B cell (primary cell): ENCODE measurements at regions of chr10 and their contacts with region 1.

Region 1: DNA sequence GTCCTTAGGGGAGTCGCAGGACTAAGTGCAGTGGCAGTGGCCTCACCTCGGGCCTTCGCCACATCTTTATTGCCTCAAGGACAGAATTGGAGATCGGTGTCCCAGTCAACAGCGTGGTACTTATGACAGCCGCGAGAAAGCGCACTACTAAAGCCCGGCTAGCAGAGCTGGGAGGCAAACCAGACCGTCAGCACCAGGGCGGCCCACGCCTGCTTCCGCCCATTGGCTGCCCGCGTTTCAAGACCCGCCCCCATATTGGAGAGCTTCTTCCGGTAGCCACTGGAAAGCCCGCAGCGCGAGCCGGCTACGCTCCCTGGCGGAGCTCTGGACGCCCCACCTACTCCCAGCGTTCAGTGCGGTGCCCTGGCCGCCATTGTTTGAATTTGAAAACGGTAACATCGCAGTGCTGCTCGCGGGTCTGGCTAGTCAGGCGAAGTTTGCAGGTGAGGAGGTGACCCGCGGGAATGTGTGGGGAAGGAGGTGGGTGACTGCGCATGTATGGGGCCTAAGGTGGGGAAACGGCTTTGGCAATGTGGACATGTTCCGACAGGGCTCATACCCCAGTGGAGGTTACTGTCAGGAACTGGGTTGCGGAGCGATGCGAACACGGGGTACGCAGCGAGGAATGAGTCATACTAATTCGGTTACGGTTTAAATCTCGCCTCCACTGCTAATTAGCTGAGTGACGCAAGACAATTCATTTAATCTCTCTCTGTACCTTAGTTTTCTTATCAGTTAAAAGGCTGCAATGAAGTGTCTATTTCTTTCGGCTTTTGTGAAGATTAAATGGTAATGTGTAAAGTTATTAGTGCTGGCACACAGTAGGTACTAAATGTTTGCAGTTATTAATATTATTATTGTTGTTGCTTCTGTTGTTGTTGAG is at the start of gene KIF20B:
- DNase-seq: peak; percentile 95
- ATAC-seq: peak; percentile 98
- H3K4me3 ChIP-seq: peak within 1 kb of the TSS; percentile 86 to 98 (median 95)
- H3K4me3 Mint-ChIP-seq: peak within 1 kb of the TSS; percentile 99
- H3K27ac ChIP-seq: peak within 1 kb of the TSS; percentile 79 to 87
- H3K27ac Mint-ChIP-seq: peak within 1 kb of the TSS; percentile 99
- H3K4me1 ChIP-seq: peaks cover 9 to 10% of the 10 kb centered on the region in 2 donors
- H3K4me1 Mint-ChIP-seq: peaks cover 32% of the 10 kb centered on the region
- H3K27me3 ChIP-seq: no peaks in the 10 kb centered on the region
- H3K27me3 Mint-ChIP-seq: no peaks in the 10 kb centered on the region
- CTCF ChIP-seq: peak; percentile 29
- total RNA-seq, gene KIF20B: 24.6 and 25.3 TPM in 2 replicates

Region 2: DNA sequence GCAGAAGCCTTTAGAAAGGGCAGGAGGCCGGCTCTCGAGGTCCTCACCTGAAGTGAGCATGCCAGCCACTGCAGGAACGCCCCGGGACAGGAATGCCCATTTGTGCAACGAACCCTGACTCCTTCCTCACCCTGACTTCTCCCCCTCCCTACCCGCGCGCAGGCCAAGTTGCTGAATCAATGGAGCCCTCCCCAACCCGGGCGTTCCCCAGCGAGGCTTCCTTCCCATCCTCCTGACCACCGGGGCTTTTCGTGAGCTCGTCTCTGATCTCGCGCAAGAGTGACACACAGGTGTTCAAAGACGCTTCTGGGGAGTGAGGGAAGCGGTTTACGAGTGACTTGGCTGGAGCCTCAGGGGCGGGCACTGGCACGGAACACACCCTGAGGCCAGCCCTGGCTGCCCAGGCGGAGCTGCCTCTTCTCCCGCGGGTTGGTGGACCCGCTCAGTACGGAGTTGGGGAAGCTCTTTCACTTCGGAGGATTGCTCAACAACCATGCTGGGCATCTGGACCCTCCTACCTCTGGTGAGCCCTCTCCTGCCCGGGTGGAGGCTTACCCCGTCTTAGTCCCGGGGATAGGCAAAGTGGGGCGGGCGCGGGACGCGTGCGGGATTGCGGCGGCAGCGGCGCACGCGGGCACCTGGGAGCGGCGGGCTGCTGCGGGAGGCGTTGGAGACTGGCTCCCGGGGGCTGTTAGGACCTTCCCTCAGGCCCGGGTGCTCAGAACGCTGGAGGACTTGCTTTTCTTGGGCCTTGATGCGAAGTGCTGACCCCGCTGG is 710.9 kb before region 1 on chr10 and contains the start of gene FAS:
- CTCF ChIA-PET with region 1: no interaction called
- POLR2A ChIA-PET with region 1: no interaction called
- intact Hi-C with region 1: loop called (anchors 10 kb)
- DNase-seq: peak; percentile 87
- ATAC-seq: peak; percentile 65
- H3K4me3 ChIP-seq: peak within 1 kb of the TSS; percentile 73 to 95 (median 86)
- H3K4me3 Mint-ChIP-seq: peak within 1 kb of the TSS; percentile 98
- H3K27ac ChIP-seq: peak within 1 kb of the TSS; percentile 63 to 80
- H3K27ac Mint-ChIP-seq: peak within 1 kb of the TSS; percentile 83
- H3K4me1 ChIP-seq: peaks cover 17 to 25% of the 10 kb centered on the region in 2 donors
- H3K4me1 Mint-ChIP-seq: peaks cover 43% of the 10 kb centered on the region
- H3K27me3 ChIP-seq: no peaks in the 10 kb centered on the region
- H3K27me3 Mint-ChIP-seq: no peaks in the 10 kb centered on the region
- CTCF ChIP-seq: peak; percentile 7
- total RNA-seq, gene FAS: 11.5 and 13.7 TPM in 2 replicates

Region 3: DNA sequence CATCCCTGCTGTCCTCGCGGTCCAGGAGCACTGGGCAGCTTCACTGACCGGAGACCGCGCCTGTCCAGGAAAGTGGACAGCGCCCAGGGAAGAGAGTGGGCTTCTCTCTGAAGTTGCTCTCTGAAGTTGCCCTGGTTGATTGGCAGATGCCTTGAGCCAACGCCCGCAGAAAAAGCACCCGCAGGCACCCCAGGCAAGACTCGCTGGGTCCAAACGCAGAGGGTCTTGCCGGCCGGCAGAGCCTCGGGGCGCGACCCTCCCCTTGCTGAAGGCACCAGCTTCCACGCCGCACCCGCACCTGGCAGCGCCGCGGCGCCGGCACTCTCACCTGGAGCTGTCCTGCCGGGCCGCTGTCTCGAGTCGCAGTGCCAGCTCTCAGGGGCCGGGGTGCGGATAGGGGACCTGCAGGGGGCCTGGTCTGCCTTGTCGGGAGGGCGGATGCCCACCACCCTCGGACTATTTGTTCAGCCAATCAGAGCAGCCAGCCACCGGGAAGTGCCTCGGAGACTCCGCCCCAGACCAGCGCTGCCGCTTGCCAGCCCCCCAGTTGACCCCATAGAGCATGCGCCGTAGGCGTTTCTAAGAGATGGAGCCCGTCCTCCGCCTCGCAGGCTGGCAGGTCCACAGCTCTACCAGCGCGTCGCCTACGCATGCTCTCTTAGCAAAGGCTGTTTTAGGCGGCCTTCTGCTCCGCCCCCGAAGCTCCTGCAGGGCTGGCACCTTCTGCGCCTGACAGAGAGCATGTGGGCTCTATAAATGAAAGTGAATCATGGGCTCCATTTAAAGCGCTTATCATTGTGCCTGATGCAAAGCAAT is 449.9 kb before region 1 on chr10 and contains the start of gene LIPA:
- CTCF ChIA-PET with region 1: no interaction called
- POLR2A ChIA-PET with region 1: no interaction called
- intact Hi-C with region 1: loop called (anchors 1 kb)
- DNase-seq: peak; percentile 99
- ATAC-seq: peak; percentile 95
- H3K4me3 ChIP-seq: peak within 1 kb of the TSS; percentile 65 to 92 (median 84)
- H3K4me3 Mint-ChIP-seq: peak within 1 kb of the TSS; percentile 94
- H3K27ac ChIP-seq: peak within 1 kb of the TSS; percentile 48 to 71
- H3K27ac Mint-ChIP-seq: peak within 1 kb of the TSS; percentile 85
- H3K4me1 ChIP-seq: peaks cover 18% of the 10 kb centered on the region in 2 donors
- H3K4me1 Mint-ChIP-seq: peaks cover 24% of the 10 kb centered on the region
- H3K27me3 ChIP-seq: no peaks in the 10 kb centered on the region
- H3K27me3 Mint-ChIP-seq: no peaks in the 10 kb centered on the region
- CTCF ChIP-seq: no peak
- total RNA-seq, gene LIPA: 36.5 and 38.9 TPM in 2 replicates

Region 4: GRCh38 chr10:89301721-89302445 is 399.6 kb before region 1 on chr10 and contains the start of gene IFIT2:
- CTCF ChIA-PET with region 1: no interaction called
- POLR2A ChIA-PET with region 1: no interaction called
- intact Hi-C with region 1: loop called (anchors 1 kb)
- DNase-seq: peak; percentile 87
- ATAC-seq: peak; percentile 95
- H3K4me3 ChIP-seq: peak within 1 kb of the TSS; percentile 57 to 92 (median 76)
- H3K4me3 Mint-ChIP-seq: peak within 1 kb of the TSS; percentile 94
- H3K27ac ChIP-seq: peak within 1 kb of the TSS; percentile 93 to 94
- H3K27ac Mint-ChIP-seq: peak within 1 kb of the TSS; percentile 97
- H3K4me1 ChIP-seq: peaks cover 37% of the 10 kb centered on the region in 2 donors
- H3K4me1 Mint-ChIP-seq: peaks cover 54% of the 10 kb centered on the region
- H3K27me3 ChIP-seq: no peaks in the 10 kb centered on the region
- H3K27me3 Mint-ChIP-seq: no peaks in the 10 kb centered on the region
- CTCF ChIP-seq: no peak
- total RNA-seq, gene IFIT2: 12.4 and 13.4 TPM in 2 replicates

Region 5: GRCh38 chr10:89490596-89491335 is 210.7 kb before region 1 on chr10:
- CTCF ChIA-PET with region 1: no interaction called
- POLR2A ChIA-PET with region 1: no interaction called
- intact Hi-C with region 1: no loop called
- DNase-seq: no peak
- ATAC-seq: no peak
- H3K4me3 ChIP-seq: no peak overlapping the region
- H3K4me3 Mint-ChIP-seq: no peak overlapping the region
- H3K27ac ChIP-seq: no peak overlapping the region
- H3K27ac Mint-ChIP-seq: no peak overlapping the region
- H3K4me1 ChIP-seq: no peaks in the 10 kb centered on the region
- H3K4me1 Mint-ChIP-seq: no peaks in the 10 kb centered on the region
- H3K27me3 ChIP-seq: peaks cover 0 to 15% (median 4%) of the 10 kb centered on the region in 4 experiments
- H3K27me3 Mint-ChIP-seq: peaks cover 39% of the 10 kb centered on the region
- CTCF ChIP-seq: no peak

Region 6: DNA sequence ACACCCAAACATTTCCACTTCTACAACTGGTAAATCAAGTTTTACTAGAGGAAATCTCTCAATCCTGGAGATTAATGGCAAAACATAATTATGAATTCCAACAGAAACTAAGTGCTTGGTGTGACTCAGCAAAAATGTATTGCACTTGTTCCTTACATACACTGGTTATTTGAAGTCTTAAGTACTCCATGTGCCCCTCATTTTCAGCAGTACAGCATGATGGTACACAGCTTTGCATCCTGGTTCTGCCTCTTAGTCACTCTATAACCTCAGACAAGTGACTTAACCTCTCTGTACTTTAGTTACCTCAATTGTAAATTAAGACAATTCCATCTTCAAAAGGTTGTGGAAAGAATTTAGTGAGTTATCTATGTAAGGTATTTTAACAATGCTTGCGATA is 179.0 kb before region 1 on chr10:
- CTCF ChIA-PET with region 1: no interaction called
- POLR2A ChIA-PET with region 1: no interaction called
- intact Hi-C with region 1: no loop called
- DNase-seq: no peak
- ATAC-seq: no peak
- H3K4me3 ChIP-seq: no peak overlapping the region
- H3K4me3 Mint-ChIP-seq: no peak overlapping the region
- H3K27ac ChIP-seq: no peak overlapping the region
- H3K27ac Mint-ChIP-seq: no peak overlapping the region
- H3K4me1 ChIP-seq: no peaks in the 10 kb centered on the region
- H3K4me1 Mint-ChIP-seq: no peaks in the 10 kb centered on the region
- H3K27me3 ChIP-seq: peaks cover 0 to 3% (median 1%) of the 10 kb centered on the region in 4 experiments
- H3K27me3 Mint-ChIP-seq: peaks cover 10% of the 10 kb centered on the region
- CTCF ChIP-seq: no peak

Region 7: GRCh38 chr10:89643431-89644331 is 57.8 kb before region 1 on chr10:
- CTCF ChIA-PET with region 1: interaction called, 9 read pairs
- POLR2A ChIA-PET with region 1: interaction called, 14 read pairs
- intact Hi-C with region 1: loop called (anchors 1 kb)
- DNase-seq: peak; percentile 85
- ATAC-seq: peak; percentile 91
- H3K4me3 ChIP-seq: peak overlapping the region; percentile 60 to 78 (median 75)
- H3K4me3 Mint-ChIP-seq: no peak overlapping the region
- H3K27ac ChIP-seq: peak overlapping the region in 1 of 2 donors; percentile 15
- H3K27ac Mint-ChIP-seq: no peak overlapping the region
- H3K4me1 ChIP-seq: peaks cover 12 to 25% of the 10 kb centered on the region in 2 donors
- H3K4me1 Mint-ChIP-seq: peaks cover 14% of the 10 kb centered on the region
- H3K27me3 ChIP-seq: peaks cover 0 to 2% (median 0%) of the 10 kb centered on the region in 4 experiments
- H3K27me3 Mint-ChIP-seq: no peaks in the 10 kb centered on the region
- CTCF ChIP-seq: no peak

Region 8: DNA sequence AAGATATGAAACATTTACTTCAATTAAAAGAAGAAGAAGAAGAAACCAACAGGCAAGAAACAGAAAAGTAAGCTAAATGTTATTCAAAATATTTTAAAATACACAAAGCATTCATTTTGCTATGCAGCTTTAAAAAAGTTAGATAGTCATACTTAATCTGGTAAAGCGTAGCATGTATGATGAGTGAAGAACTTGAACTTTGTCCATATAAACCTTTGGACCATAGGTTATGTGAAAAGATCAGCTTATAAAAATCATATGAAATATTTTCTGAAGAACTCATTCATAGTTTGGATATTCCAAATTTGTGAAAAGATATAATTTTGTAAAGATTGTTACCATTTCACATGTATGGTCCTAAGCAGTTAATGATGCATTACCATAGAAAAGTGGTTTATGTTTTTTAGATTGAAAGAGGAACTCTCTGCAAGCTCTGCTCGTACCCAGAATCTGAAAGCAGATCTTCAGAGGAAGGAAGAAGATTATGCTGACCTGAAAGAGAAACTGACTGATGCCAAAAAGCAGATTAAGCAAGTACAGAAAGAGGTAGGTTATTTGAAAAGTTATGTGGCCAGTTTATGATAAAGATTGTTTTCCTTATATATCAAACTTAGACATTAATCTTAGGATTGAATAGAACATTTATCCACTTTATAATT is 37.2 kb after region 1 on chr10:
- CTCF ChIA-PET with region 1: interaction called, 8 read pairs
- POLR2A ChIA-PET with region 1: interaction called, 4 read pairs
- intact Hi-C with region 1: loop called (anchors 1 kb)
- DNase-seq: peak; percentile 70
- ATAC-seq: peak; percentile 93
- H3K4me3 ChIP-seq: peak overlapping the region in 4 of 5 experiments; percentile 1 to 61 (median 26)
- H3K4me3 Mint-ChIP-seq: peak overlapping the region; percentile 70
- H3K27ac ChIP-seq: peak overlapping the region; percentile 65 to 80
- H3K27ac Mint-ChIP-seq: peak overlapping the region; percentile 89
- H3K4me1 ChIP-seq: peaks cover 11 to 24% of the 10 kb centered on the region in 2 donors
- H3K4me1 Mint-ChIP-seq: peaks cover 24% of the 10 kb centered on the region
- H3K27me3 ChIP-seq: no peaks in the 10 kb centered on the region
- H3K27me3 Mint-ChIP-seq: no peaks in the 10 kb centered on the region
- CTCF ChIP-seq: no peak

Region 9: GRCh38 chr10:90871766-90872647 is 1170.5 kb after region 1 on chr10 and contains the start of gene RPP30:
- CTCF ChIA-PET with region 1: interaction called, 3 read pairs
- POLR2A ChIA-PET with region 1: no interaction called
- intact Hi-C with region 1: loop called (anchors 2 kb)
- DNase-seq: peak; percentile 86
- ATAC-seq: peak; percentile 97
- H3K4me3 ChIP-seq: peak within 1 kb of the TSS; percentile 72 to 96 (median 92)
- H3K4me3 Mint-ChIP-seq: peak within 1 kb of the TSS; percentile 92
- H3K27ac ChIP-seq: peak within 1 kb of the TSS; percentile 51 to 62
- H3K27ac Mint-ChIP-seq: peak within 1 kb of the TSS; percentile 84
- H3K4me1 ChIP-seq: peaks cover 16 to 18% of the 10 kb centered on the region in 2 donors
- H3K4me1 Mint-ChIP-seq: peaks cover 32% of the 10 kb centered on the region
- H3K27me3 ChIP-seq: peaks cover 0 to 13% (median 7%) of the 10 kb centered on the region in 4 experiments
- H3K27me3 Mint-ChIP-seq: peaks cover 27% of the 10 kb centered on the region
- CTCF ChIP-seq: no peak
- total RNA-seq, gene RPP30: 41.7 and 42.3 TPM in 2 replicates